Ovary (tissue), 10 donors: ENCODE measurements at regions of chr17 and their contacts with region 1.

Region 1: GRCh38 chr17:8745586-8746500 is 1.2 kb upstream of the CCDC42 start:
- DNase-seq: peak; percentile 72 to 87 (median 84)
- H3K4me3 ChIP-seq: peak overlapping the region; percentile 47
- H3K27ac ChIP-seq: no peak overlapping the region
- H3K4me1 ChIP-seq: no peaks in the 10 kb centered on the region
- H3K27me3 ChIP-seq: no peaks in the 10 kb centered on the region
- CTCF ChIP-seq: peak; percentile 82 to 88 (median 83)
- EP300 ChIP-seq: no peak
- POLR2A ChIP-seq: no peak

Region 2: DNA sequence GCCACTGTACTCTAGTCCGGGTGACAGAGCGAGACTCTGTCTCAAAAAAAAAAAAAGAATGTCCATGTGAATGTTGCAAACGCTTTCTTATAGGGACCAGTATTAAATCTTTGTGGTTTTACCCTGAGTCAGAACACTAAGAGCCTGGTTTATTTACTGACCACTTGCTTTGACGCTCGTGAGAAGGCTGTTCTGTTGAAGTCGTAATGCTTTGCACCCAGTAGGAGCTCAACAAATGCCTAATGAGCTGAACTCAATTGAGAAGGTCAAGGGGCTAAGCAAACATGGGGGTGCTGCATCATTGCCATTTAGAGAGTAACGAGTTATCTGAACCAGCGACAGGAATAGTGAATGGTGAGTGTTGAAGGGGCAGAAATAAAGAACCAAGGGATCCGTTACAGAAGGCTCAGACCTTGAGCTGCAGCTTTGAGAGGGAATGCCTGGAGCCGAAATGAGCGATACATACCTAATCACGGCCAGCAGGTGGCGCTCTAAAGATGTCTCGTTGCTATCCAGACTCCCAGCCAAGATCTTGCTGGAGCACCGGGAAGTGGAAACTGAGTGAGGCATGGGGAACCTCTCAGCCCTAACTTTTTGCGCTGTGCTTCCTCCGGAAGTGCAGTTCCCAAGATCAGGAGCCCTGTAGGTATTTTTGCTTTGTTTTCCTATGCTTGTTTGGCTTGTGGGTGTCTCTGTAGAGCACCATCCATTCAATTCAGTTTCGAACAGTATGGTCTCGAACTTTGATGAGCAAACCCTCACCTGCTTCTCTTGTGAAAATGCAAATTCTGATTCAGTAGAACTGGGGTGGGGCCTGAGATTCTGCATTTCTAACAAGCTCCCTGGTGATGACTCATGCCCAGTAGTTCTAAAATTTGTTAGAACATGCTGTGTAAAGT is 335.6 kb before region 1 on chr17:
- intact Hi-C with region 1: loop called (anchors 2 to 5 kb)
- DNase-seq: peak; percentile 86 to 94 (median 92)
- H3K4me3 ChIP-seq: no peak overlapping the region
- H3K27ac ChIP-seq: no peak overlapping the region
- H3K4me1 ChIP-seq: no peaks in the 10 kb centered on the region
- H3K27me3 ChIP-seq: no peaks in the 10 kb centered on the region
- CTCF ChIP-seq: peak; percentile 71 to 80 (median 80)
- EP300 ChIP-seq: no peak
- POLR2A ChIP-seq: no peak

Region 3: DNA sequence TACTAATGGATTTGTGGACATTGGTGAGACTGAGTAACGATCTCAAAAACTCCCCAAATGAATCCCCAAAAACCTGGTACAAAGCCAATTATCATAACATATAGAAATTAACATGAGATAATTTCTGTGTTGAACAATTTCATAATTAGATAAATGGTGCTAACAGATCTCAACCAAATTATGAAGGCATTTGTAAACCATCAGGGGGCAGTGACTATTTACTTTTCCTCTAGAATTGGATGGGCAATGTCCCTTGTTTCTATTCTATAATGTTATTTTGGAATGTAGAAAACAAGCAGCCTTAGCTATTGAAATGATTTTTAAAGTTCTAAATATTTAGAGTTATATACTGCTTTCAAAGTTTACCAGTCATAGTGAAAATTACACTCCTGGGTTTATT is 173.1 kb before region 1 on chr17:
- intact Hi-C with region 1: loop called (anchors 5 to 10 kb)
- DNase-seq: no peak
- H3K4me3 ChIP-seq: no peak overlapping the region
- H3K27ac ChIP-seq: no peak overlapping the region
- H3K4me1 ChIP-seq: no peaks in the 10 kb centered on the region
- H3K27me3 ChIP-seq: no peaks in the 10 kb centered on the region
- CTCF ChIP-seq: no peak
- EP300 ChIP-seq: no peak
- POLR2A ChIP-seq: no peak

Region 4: DNA sequence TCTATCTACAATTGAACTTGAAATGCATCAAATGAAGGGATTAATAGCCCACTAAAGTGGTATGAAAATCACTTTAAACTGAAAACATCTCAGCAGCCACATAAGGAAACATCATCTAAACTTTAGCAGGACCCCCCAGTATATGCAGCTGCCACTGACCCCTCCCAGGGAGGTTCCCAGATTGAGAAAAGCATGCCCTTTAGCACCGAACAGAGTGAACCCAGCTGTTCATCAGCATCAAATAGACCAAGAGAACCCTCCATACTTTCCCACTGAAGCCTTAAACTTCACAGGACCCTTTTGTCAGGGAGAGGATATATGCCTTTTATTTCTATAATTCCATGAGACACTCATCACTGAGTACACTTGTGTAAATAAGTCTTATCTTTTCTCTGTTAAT is 159.9 kb before region 1 on chr17:
- intact Hi-C with region 1: loop called in 1 of 4 experiments (anchors 5 kb)
- DNase-seq: no peak
- H3K4me3 ChIP-seq: no peak overlapping the region
- H3K27ac ChIP-seq: no peak overlapping the region
- H3K4me1 ChIP-seq: peaks cover 3% of the 10 kb centered on the region
- H3K27me3 ChIP-seq: no peaks in the 10 kb centered on the region
- CTCF ChIP-seq: no peak
- EP300 ChIP-seq: no peak
- POLR2A ChIP-seq: no peak

Region 5: DNA sequence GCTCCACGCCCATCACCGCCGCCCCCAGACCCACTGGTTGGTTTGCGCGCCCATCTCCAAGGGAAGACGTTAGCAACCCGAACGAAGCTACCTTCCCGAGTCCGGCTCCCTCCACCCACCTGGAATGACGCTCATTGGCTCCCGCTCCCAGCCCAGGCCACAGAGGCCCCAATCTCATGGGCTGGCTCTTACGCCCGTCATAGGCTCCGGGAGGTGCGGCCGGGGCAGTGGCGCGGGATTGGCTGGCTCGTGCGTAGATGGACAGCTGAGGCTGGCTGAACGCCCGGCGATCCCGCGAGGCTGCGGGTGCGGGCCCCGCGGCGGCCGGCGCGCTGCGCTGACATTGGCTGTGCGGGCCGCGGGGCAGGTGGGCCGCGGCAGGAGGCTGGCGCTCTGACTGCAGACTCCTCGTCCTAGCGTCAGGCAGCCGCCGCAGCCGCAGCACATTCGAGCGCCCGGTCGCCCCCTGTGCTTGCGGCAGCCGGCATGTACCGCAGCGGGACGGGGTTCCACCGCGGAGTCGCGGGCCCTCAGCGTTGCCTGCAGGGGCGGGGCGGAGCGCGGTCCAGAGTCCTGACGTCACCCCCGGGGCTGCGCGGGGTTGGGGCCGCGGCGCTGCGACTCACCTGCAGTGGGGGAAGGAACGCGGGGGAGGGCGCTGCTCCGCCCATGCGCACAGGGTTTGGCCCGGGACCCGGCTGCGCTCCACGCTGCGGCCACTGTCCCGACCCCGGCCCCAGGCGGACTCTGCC is 114.9 kb before region 1 on chr17:
- intact Hi-C with region 1: loop called in 1 of 4 experiments (anchors 10 kb)
- DNase-seq: peak; percentile 98 to 99 (median 99)
- H3K4me3 ChIP-seq: peak overlapping the region; percentile 84
- H3K27ac ChIP-seq: peak overlapping the region; percentile 38 to 76
- H3K4me1 ChIP-seq: peaks cover 3% of the 10 kb centered on the region
- H3K27me3 ChIP-seq: no peaks in the 10 kb centered on the region
- CTCF ChIP-seq: peak in 2 of 3 donors; percentile 47
- EP300 ChIP-seq: no peak
- POLR2A ChIP-seq: no peak